Activated CD4-positive, alpha-beta memory T cell treated with anti-CD3 and anti-CD28 coated beads, Interleukin-2, amount 10 ng/mL, durations not matched to agents 7 days and 5 days (primary cell): ENCODE measurements at regions of chr3 and their contacts with region 1.

Region 1: GRCh38 chr3:64023187-64023848 is at the start of gene PSMD6:
- DNase-seq: peak; percentile 92
- H3K4me3 Mint-ChIP-seq: peak within 1 kb of the TSS; percentile 81
- H3K27ac Mint-ChIP-seq: peak within 1 kb of the TSS; percentile 86
- H3K4me1 Mint-ChIP-seq: peaks cover 35% of the 10 kb centered on the region
- H3K27me3 Mint-ChIP-seq: peaks cover 12% of the 10 kb centered on the region
- total RNA-seq, gene PSMD6: 82.1 to 82.9 TPM

Region 2: DNA sequence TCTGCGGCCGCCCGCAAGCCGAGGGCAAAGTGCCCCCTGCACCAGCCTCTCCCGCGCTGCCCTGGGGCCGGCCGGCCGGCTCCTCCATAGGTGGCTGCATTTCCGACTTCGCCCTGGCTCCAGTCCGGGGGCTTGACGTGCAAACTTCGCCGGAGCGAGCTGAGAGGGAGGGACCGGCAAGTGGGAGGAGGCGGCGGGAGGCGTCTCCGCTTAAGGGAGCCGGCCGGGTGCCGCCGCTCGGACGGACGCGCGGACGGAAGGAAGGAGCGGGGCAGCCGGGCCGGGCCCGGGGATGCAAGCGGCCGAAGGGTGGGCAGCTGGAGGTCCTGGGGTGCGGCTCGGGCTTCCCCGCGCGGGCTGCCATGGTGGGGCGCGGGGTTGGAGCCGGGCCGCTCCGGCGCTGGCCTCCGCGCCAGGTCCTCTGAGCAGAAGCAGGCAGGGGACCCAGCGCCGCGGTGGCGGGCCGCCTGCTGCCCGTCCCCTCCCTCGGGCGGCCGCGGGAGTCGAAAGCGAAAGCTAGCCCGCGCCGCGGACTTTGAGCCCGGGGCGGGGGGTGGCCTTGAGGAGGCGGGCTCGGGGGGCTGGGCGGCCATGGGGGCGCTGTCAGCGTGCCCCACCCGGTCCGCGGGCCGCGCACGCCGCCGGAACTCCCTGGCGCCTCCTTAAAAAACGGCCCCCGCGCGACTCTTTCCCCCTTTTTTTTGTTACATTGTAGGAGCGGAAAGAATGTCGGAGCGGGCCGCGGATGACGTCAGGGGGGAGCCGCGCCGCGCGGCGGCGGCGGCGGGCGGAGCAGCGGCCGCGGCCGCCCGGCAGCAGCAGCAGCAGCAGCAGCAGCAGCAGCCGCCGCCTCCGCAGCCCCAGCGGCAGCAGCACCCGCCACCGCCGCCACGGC is 111.2 kb before region 1 on chr3 and contains the start of gene SCAANT1:
- CTCF ChIA-PET with region 1: interaction called, 3 read pairs
- POLR2A ChIA-PET with region 1: interaction called, 10 read pairs
- DNase-seq: peak; percentile 80
- H3K4me3 Mint-ChIP-seq: peak within 1 kb of the TSS; percentile 85
- H3K27ac Mint-ChIP-seq: peak within 1 kb of the TSS; percentile 96
- H3K4me1 Mint-ChIP-seq: peaks cover 51% of the 10 kb centered on the region
- H3K27me3 Mint-ChIP-seq: no peaks in the 10 kb centered on the region
- total RNA-seq, gene SCAANT1: not detected

Region 3: GRCh38 chr3:63961891-63962290 is 61.4 kb before region 1 on chr3:
- CTCF ChIA-PET with region 1: interaction called, 15 read pairs
- POLR2A ChIA-PET with region 1: interaction called, 19 read pairs
- DNase-seq: no peak
- H3K4me3 Mint-ChIP-seq: no peak overlapping the region
- H3K27ac Mint-ChIP-seq: no peak overlapping the region
- H3K4me1 Mint-ChIP-seq: peaks cover 58% of the 10 kb centered on the region
- H3K27me3 Mint-ChIP-seq: no peaks in the 10 kb centered on the region

Region 4: DNA sequence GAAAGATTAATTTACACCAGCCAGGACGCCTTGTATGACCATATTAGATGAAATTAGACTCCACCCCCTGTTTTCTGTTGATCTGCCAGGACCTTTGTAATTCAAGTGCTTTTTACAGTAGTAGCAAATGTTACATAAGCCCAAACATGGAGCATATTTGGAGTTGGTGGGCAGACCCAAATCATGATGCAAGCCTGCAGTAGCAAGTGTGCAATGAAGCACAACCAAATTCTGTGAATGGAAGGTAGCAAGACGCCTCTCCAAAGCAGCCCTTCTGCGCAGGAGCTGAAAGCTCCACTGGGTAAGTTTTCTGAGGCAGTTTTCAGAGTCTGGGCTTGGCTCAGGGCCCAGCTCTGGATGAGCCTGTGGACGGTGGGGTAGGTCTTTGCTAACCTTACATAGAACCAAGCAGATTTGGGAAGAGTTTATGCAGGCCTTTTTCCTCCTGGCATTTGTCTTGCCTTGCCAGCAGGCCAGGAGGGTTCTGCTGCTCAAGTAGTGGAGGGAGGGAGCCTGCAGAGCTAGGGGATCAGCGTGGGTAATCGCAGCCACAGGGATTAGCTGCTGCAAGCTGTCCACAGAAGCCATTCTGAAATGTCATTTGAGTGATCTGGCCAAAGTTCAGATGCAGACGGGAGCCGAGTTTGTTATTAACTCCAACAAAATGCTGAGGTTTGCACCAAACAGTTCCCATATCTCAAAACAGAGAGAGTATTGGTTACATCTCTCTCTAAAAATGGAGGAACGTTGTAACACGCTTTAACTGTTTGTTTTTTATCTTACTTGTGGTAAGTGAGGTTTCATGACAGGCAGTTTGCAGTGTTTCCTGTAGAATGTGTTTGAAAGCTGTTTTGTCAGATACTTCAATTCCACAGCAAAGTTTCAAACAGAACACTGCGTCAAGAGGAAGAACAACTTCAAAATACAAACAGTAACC is 55.4 kb before region 1 on chr3:
- CTCF ChIA-PET with region 1: interaction called, 15 read pairs
- POLR2A ChIA-PET with region 1: interaction called, 19 read pairs
- DNase-seq: peak; percentile 49
- H3K4me3 Mint-ChIP-seq: peak overlapping the region; percentile 80
- H3K27ac Mint-ChIP-seq: peak overlapping the region; percentile 98
- H3K4me1 Mint-ChIP-seq: peaks cover 87% of the 10 kb centered on the region
- H3K27me3 Mint-ChIP-seq: no peaks in the 10 kb centered on the region

Region 5: DNA sequence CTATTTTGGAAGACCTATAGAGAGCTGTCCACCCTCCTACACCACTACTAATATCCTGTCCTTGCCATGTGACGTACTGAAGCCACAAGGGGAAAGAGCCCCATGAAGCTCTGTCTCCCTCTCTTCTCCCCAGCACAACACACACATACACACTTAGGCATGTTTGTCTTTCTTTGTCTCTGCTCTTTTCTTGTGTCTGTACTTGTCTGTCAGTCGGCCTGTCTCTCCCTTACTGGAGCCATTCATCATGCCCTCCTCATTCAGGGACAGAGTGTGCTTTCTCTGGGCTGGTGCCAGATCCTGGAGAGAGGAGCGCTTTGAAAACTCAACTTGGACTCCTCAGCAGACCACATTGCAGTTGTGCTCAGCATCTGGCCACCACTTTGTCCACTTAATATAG is 47.6 kb before region 1 on chr3:
- CTCF ChIA-PET with region 1: interaction called, 25 read pairs
- POLR2A ChIA-PET with region 1: interaction called, 23 read pairs
- DNase-seq: no peak
- H3K4me3 Mint-ChIP-seq: no peak overlapping the region
- H3K27ac Mint-ChIP-seq: peak overlapping the region; percentile 50
- H3K4me1 Mint-ChIP-seq: peaks cover 94% of the 10 kb centered on the region
- H3K27me3 Mint-ChIP-seq: no peaks in the 10 kb centered on the region

Region 6: DNA sequence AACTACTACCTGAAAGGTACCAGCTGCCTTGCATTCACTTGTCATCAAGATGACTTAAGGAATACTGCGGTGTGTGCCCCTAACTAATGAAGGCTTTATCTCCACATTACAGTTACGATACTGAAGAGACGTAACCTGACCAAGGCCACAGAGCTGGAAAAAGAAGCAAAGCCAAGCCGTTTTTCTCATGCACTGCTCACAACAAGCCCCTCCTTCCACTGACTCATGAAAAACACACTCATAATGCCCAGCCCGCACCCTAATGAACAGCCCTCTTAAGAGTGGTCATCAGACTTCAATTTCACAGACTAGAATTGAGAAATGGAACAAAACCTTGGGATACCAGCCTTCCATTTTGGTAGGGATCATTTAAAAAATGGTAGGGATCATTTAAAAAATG is 11.6 kb before region 1 on chr3:
- CTCF ChIA-PET with region 1: interaction called, 20 read pairs
- POLR2A ChIA-PET with region 1: interaction called, 46 read pairs
- DNase-seq: no peak
- H3K4me3 Mint-ChIP-seq: no peak overlapping the region
- H3K27ac Mint-ChIP-seq: no peak overlapping the region
- H3K4me1 Mint-ChIP-seq: peaks cover 46% of the 10 kb centered on the region
- H3K27me3 Mint-ChIP-seq: no peaks in the 10 kb centered on the region

Region 7: DNA sequence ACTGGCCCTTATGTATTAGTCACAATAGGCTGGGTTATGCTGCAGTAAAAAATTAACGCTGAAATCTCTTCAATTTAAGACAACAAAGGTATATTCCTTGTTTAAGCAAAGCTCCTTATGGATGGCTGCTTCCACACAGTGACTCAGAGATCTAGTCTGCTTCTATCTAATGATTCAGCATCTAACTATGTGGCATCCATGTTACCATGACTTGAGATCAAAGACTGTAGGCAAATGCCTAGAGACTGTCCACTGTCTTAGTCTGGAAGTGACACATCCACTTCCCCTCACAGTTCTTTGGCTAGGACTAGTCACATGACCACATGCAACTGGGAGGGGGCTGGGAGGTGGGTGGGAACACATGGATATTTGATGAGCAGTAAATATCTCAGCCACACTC is 61.3 kb after region 1 on chr3:
- CTCF ChIA-PET with region 1: no interaction called
- POLR2A ChIA-PET with region 1: no interaction called
- DNase-seq: no peak
- H3K4me3 Mint-ChIP-seq: no peak overlapping the region
- H3K27ac Mint-ChIP-seq: no peak overlapping the region
- H3K4me1 Mint-ChIP-seq: no peaks in the 10 kb centered on the region
- H3K27me3 Mint-ChIP-seq: peaks cover 5% of the 10 kb centered on the region

Region 8: GRCh38 chr3:64484289-64484992 is 461.1 kb after region 1 on chr3:
- CTCF ChIA-PET with region 1: interaction called, 28 read pairs
- POLR2A ChIA-PET with region 1: no interaction called
- DNase-seq: peak; percentile 69
- H3K4me3 Mint-ChIP-seq: no peak overlapping the region
- H3K27ac Mint-ChIP-seq: no peak overlapping the region
- H3K4me1 Mint-ChIP-seq: peaks cover 6% of the 10 kb centered on the region
- H3K27me3 Mint-ChIP-seq: peaks cover 14% of the 10 kb centered on the region